ENCODE measurements at regions of chr7 and their contacts with region 1.

Region 1: GRCh38 chr7:159158888-159159405 is 14.3 kb upstream of the VIPR2 start:
- DNase-seq: peak in 2 of 10 donors; percentile 72 to 84

Region 2: GRCh38 chr7:159127691-159128642 is 31.0 kb before region 1 on chr7:
- intact Hi-C with region 1: loop called (anchors 1 kb)
- DNase-seq: peak in 3 of 10 donors; percentile 48 to 55 (median 48)

Region 3: DNA sequence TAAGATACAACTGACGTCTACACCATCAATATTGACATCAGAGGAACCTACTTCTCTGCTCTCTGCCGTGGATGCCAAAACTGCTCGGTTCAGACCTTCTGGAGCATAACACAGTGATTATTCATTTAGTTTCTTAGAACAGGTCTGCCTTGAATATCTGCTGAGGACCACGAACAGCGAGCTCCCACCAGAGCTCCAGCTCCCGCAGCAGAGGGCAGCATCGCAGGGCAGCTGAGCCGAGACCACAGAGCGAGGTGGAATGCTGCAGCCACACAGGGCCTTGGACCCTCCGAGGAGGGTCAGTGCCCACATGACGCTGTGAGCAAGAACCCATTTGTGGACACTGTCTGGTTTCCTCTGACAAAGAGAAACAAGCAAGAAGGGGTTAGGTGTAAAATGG is 21.0 kb before region 1 on chr7:
- intact Hi-C with region 1: loop called (anchors 1 kb)
- DNase-seq: peak in 3 of 10 donors; percentile 56 to 70 (median 58)

Measured in posterior cingulate gyrus (tissue), 11 donors.